ENCODE measurements at regions of chr4 and their contacts with region 1.

Region 1: GRCh38 chr4:80011636-80012236 is 61.3 kb downstream of the ANTXR2 start:
- DNase-seq: peak; percentile 94
- ATAC-seq: peak; percentile 95
- H3K4me3 ChIP-seq: no peak overlapping the region
- H3K27ac ChIP-seq: no peak overlapping the region
- H3K4me1 ChIP-seq: peaks cover 11% of the 10 kb centered on the region
- H3K27me3 ChIP-seq: no peaks in the 10 kb centered on the region
- CTCF ChIP-seq: no peak
- POLR2A ChIP-seq: no peak
- RAD21 ChIP-seq: no peak

Region 2: DNA sequence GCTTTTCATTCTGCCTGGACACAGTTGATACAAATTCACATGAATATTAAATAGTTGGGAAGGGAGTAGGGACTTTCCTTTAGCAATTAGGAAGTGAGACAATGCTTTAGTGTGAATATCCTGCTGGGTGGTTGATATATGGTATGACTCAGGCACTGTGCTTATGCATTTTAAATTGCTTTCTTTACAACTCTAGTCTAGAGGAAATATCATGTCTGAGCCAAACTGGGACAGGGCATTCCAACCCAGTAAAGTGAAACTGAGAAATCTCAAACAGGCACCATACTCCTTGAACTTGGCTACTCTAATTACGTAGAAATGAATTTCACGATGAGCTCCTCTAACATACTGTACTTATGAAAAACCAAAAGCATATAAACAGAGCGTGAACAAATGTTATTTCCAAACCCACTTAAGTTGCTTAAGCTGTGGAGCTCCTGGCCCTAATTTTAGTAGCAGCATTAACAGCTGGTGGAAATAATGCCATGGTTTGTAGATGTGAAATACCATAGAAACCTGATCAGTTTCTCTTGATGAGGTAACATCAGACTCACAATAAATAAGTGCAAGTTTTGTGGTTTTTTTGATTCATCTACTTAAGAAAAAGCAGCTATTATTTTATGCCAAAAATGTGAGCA is 360.8 kb before region 1 on chr4:
- CTCF ChIA-PET with region 1: no interaction called
- POLR2A ChIA-PET with region 1: no interaction called
- dilution Hi-C with region 1: no loop called
- in situ Hi-C with region 1: no loop called
- intact Hi-C with region 1: loop called (anchors 2 kb)
- DNase-seq: peak; percentile 77
- ATAC-seq: peak; percentile 74
- H3K4me3 ChIP-seq: no peak overlapping the region
- H3K27ac ChIP-seq: peak overlapping the region; percentile 97; the same call in 1 of the 2 replicates
- H3K4me1 ChIP-seq: peaks cover 2% of the 10 kb centered on the region
- H3K27me3 ChIP-seq: no peaks in the 10 kb centered on the region
- CTCF ChIP-seq: no peak
- POLR2A ChIP-seq: no peak
- RAD21 ChIP-seq: no peak

Region 3: GRCh38 chr4:79949178-79949577 is 62.6 kb before region 1 on chr4:
- CTCF ChIA-PET with region 1: no interaction called
- POLR2A ChIA-PET with region 1: no interaction called
- dilution Hi-C with region 1: no loop called
- in situ Hi-C with region 1: no loop called
- intact Hi-C with region 1: no loop called
- DNase-seq: no peak
- ATAC-seq: no peak
- H3K4me3 ChIP-seq: no peak overlapping the region
- H3K27ac ChIP-seq: no peak overlapping the region
- H3K4me1 ChIP-seq: no peaks in the 10 kb centered on the region
- H3K27me3 ChIP-seq: no peaks in the 10 kb centered on the region
- CTCF ChIP-seq: no peak
- POLR2A ChIP-seq: no peak
- RAD21 ChIP-seq: no peak

Region 4: GRCh38 chr4:80036949-80037685 is 25.4 kb after region 1 on chr4:
- CTCF ChIA-PET with region 1: no interaction called
- POLR2A ChIA-PET with region 1: no interaction called
- dilution Hi-C with region 1: no loop called
- in situ Hi-C with region 1: no loop called
- intact Hi-C with region 1: loop called (anchors 1 kb)
- DNase-seq: peak; percentile 77
- ATAC-seq: peak; percentile 85
- H3K4me3 ChIP-seq: peak overlapping the region; percentile 0; the same call in 1 of the 2 replicates
- H3K27ac ChIP-seq: peak overlapping the region; percentile 17; the same call in 1 of the 2 replicates
- H3K4me1 ChIP-seq: no peaks in the 10 kb centered on the region
- H3K27me3 ChIP-seq: no peaks in the 10 kb centered on the region
- CTCF ChIP-seq: no peak
- POLR2A ChIP-seq: no peak
- RAD21 ChIP-seq: no peak